ENCODE measurements at regions of chr19 and their contacts with region 1.

Region 1: GRCh38 chr19:19554074-19555023 is 16.3 kb downstream of the CILP2 start:
- H3K4me3 ChIP-seq: no peak overlapping the region
- H3K27ac ChIP-seq: no peak overlapping the region
- H3K4me1 ChIP-seq: no peaks in the 10 kb centered on the region
- CTCF ChIP-seq: 0 out of 2 replicates have a peak, but pooled peaks have one; percentile 19

Region 2: GRCh38 chr19:19568802-19569756 is 14.7 kb after region 1 on chr19:
- CTCF ChIA-PET with region 1: interaction called, 10 read pairs
- POLR2A ChIA-PET with region 1: no interaction called
- H3K4me3 ChIP-seq: no peak overlapping the region
- H3K27ac ChIP-seq: no peak overlapping the region
- H3K4me1 ChIP-seq: no peaks in the 10 kb centered on the region
- CTCF ChIP-seq: no peak

Region 3: DNA sequence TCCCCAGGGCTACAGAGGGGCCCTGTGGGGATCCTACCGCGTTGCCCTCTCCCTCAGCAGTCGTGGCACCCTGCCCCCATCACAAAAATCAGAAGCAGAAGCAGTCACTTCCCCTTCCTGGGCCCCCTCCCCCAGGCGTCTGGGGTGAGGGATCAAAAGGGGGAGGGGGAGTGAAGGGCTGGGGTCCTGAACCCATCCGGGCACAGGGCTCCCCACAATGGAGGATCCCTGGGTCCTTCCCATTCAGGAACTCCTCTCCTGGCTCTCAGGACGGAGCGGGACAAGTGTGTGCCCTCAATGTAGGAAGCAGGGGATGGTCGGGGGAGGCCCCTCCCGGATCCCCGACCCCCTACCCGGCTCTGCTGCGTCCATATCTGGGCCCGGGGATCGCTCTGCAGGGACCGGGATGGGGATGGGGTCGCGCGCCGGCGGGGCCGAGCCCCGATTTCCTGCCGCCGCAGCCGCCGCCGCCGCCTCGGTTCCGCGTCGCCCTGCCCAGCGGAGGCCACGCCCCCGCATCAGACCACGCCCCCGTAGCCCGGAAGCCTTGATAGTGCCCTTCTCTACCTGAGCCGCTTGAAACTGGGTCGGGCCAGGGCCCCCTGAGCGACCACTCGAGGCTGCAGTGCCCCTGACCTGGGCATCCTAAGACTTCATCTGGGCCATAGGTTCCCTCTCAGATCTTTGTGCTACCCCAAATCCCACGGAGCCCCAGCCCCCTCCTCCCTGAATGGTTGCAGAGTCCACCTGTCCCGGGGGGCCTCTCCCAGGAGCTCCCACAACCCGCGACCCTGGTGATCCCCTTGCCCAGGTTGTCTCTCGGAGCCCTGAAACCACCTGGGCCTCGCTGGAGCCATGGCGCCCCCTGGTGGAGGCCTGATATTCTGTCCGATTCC is 89.1 kb after region 1 on chr19 and contains the start of gene GMIP:
- CTCF ChIA-PET with region 1: interaction called, 10 read pairs
- POLR2A ChIA-PET with region 1: interaction called, 5 read pairs
- H3K4me3 ChIP-seq: peak within 1 kb of the TSS; percentile 81
- H3K27ac ChIP-seq: peak within 1 kb of the TSS; percentile 46; the same call in 1 of the 2 replicates
- H3K4me1 ChIP-seq: no peaks in the 10 kb centered on the region
- CTCF ChIP-seq: peak; percentile 62

Measured in HEK293 (cell line).